ENCODE measurements at regions of chr2 and their contacts with region 1.

Region 1: GRCh38 chr2:74421221-74421870 is at the starts of genes C2orf81 and WDR54:
- DNase-seq: peak; percentile 94
- ATAC-seq: peak; percentile 85
- H3K4me3 ChIP-seq: peak within 1 kb of the TSS; percentile 88
- H3K27ac ChIP-seq: peak within 1 kb of the TSS; percentile 49
- H3K4me1 ChIP-seq: peaks cover 6% of the 10 kb centered on the region; the same call in 1 of the 2 replicates
- H3K27me3 ChIP-seq: no peaks in the 10 kb centered on the region
- CTCF ChIP-seq: no peak
- total RNA-seq, gene C2orf81: 1.6 and 2.4 TPM in 2 replicates
- total RNA-seq, gene WDR54: 38.8 and 41.0 TPM in 2 replicates

Region 2: DNA sequence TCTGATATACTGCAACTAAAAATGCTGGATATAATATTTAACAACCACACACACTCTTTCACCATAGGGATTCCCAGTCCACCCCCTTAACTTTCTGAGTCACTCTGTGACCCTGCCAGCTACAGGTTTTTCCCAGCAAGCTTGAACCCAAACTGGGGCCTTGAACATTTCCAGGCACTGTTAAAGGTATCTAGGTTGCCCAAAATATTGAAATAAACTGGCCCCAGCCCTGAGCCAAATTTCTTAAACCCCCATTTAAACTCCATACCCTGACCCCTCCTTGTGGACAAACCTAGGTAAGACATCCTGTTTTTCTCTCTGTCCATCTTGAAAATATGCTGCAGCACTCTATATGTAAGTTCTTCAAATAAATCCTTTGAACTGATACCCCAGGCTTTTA is 21.6 kb before region 1 on chr2:
- CTCF ChIA-PET with region 1: interaction called, 10 read pairs
- POLR2A ChIA-PET with region 1: no interaction called
- intact Hi-C with region 1: no loop called
- DNase-seq: peak; percentile 66
- ATAC-seq: peak; percentile 57; the same call in 1 of the 2 replicates
- H3K4me3 ChIP-seq: no peak overlapping the region
- H3K27ac ChIP-seq: no peak overlapping the region
- H3K4me1 ChIP-seq: no peaks in the 10 kb centered on the region
- H3K27me3 ChIP-seq: no peaks in the 10 kb centered on the region
- CTCF ChIP-seq: peak; percentile 70

Region 3: GRCh38 chr2:74440378-74441169 is 19.2 kb after region 1 on chr2:
- CTCF ChIA-PET with region 1: no interaction called
- POLR2A ChIA-PET with region 1: no interaction called
- intact Hi-C with region 1: loop called (anchors 2 kb)
- DNase-seq: peak; percentile 82
- ATAC-seq: peak; percentile 84
- H3K4me3 ChIP-seq: peak overlapping the region; percentile 73
- H3K27ac ChIP-seq: peak overlapping the region; percentile 85
- H3K4me1 ChIP-seq: peaks cover 34% of the 10 kb centered on the region
- H3K27me3 ChIP-seq: no peaks in the 10 kb centered on the region
- CTCF ChIP-seq: peak; percentile 26; the same call in 1 of the 2 replicates